ENCODE measurements at regions of chr1 and their contacts with region 1.

Region 1: GRCh38 chr1:153532769-153533599 is 2.8 kb downstream of the S100A6 start:
- DNase-seq: peak; percentile 90
- H3K4me3 Mint-ChIP-seq: peak overlapping the region; percentile 91
- H3K27ac Mint-ChIP-seq: peak overlapping the region; percentile 96
- H3K4me1 Mint-ChIP-seq: peaks cover 58% of the 10 kb centered on the region
- H3K27me3 Mint-ChIP-seq: no peaks in the 10 kb centered on the region

Region 2: GRCh38 chr1:153520230-153520629 is 12.8 kb before region 1 on chr1:
- CTCF ChIA-PET with region 1: interaction called, 16 read pairs
- POLR2A ChIA-PET with region 1: no interaction called
- intact Hi-C with region 1: no loop called
- DNase-seq: no peak
- H3K4me3 Mint-ChIP-seq: no peak overlapping the region
- H3K27ac Mint-ChIP-seq: no peak overlapping the region
- H3K4me1 Mint-ChIP-seq: peaks cover 8% of the 10 kb centered on the region
- H3K27me3 Mint-ChIP-seq: no peaks in the 10 kb centered on the region

Region 3: DNA sequence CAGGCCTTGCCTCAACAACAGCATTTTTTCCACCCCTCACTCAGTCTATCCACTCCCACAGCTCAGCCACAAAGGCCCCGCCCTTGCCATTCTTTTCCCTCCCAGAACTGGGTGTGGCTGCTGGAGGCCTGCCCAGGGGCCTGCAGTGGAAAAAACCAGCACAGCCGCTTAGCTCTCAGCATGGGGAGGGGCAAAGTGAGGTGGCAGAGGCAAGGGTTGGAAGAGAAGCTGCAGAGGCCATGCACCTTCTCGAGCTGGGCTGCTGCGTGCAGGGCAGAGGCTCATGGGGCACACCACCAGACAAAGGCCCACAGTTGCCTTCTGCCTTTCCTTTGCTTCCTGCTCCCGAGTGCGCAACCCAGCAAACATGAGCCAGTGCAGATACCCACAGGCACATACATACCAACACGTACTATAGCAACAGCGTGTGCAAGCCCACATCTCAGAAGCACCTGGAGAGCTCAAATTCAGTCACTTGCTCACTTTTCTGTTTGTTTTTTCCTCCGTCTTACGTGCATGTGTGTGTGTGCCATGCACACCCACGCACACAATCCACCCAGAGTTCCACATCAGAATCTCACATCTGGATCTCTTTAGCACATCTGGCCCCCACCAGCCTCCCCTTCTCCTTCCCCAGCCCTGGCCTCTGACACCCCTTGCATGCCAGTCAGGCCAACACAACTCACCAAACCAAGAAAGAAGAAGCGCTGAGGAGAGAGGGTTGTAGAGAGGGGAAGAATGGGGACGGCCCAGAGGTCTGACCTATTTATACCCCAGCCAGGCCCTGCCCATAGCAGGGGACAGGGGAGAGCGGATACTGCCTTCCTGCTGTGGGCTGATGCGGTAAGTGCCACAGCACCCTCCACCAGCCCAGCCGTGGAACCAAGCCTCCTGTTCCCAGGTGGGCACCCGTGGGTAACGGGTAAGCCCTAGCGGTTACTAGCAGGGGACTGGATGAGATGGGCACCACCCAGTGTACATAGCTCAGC is 12.4 kb after region 1 on chr1 and contains the start of gene S100A4:
- CTCF ChIA-PET with region 1: interaction called, 66 read pairs
- POLR2A ChIA-PET with region 1: interaction called, 96 read pairs
- intact Hi-C with region 1: loop called (anchors 1 kb)
- DNase-seq: peak; percentile 98
- H3K4me3 Mint-ChIP-seq: peak within 1 kb of the TSS; percentile 92
- H3K27ac Mint-ChIP-seq: peak within 1 kb of the TSS; percentile 99
- H3K4me1 Mint-ChIP-seq: peaks cover 74% of the 10 kb centered on the region
- H3K27me3 Mint-ChIP-seq: no peaks in the 10 kb centered on the region
- total RNA-seq, gene S100A4: 352 to 382 TPM

Region 4: GRCh38 chr1:153566440-153567379 is 33.7 kb after region 1 on chr1:
- CTCF ChIA-PET with region 1: interaction called, 269 read pairs
- POLR2A ChIA-PET with region 1: interaction called, 99 read pairs
- intact Hi-C with region 1: loop called (anchors 1 kb)
- DNase-seq: peak; percentile 95
- H3K4me3 Mint-ChIP-seq: peak overlapping the region; percentile 64
- H3K27ac Mint-ChIP-seq: peak overlapping the region; percentile 97
- H3K4me1 Mint-ChIP-seq: peaks cover 53% of the 10 kb centered on the region
- H3K27me3 Mint-ChIP-seq: peaks cover 1% of the 10 kb centered on the region

Region 5: DNA sequence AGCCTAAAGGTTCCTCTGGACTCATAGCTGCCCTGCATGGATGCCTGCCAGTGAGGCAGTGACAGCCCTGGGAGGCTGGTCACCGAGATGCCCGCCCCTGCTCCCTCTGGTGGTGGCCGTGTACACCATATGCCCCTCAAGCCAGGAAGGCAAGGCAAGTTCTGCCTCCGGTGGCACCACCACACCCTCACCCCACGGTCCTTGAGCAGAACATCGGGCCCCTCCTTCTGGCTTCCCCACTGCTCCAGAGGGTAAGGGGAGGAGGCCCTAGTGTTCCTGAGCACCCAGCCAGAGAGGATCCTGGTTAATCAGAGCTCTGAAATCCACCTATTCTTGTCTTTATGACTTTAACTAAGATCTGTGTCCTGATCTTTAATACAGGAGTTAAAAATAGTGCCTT is 84.7 kb after region 1 on chr1:
- CTCF ChIA-PET with region 1: interaction called, 14 read pairs
- POLR2A ChIA-PET with region 1: no interaction called
- intact Hi-C with region 1: no loop called
- DNase-seq: peak; percentile 80
- H3K4me3 Mint-ChIP-seq: no peak overlapping the region
- H3K27ac Mint-ChIP-seq: no peak overlapping the region
- H3K4me1 Mint-ChIP-seq: no peaks in the 10 kb centered on the region
- H3K27me3 Mint-ChIP-seq: no peaks in the 10 kb centered on the region